Left cardiac atrium (tissue), 4 donors: ENCODE measurements at regions of chr10 and their contacts with region 1.

Region 1: DNA sequence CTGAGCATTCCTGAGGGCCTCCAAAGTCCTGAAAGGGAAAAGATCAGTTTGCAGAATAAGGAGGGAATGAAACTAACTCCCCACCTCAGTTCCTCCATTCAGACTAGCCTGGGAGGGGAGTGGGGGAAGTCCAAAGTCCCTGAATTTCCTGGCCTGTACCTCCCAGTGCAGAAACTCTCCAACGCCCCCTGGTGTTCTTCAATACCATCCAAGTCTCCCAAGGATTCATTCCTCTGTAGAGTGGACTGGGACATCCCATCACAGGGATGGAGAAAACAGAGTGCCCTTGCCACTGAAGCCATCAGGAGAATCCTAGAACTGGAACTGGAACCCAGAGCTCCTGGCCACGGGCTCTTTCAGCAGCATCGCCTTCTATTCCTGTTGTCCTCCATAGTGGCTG is 1.6 kb upstream of the COL13A1 start:
- DNase-seq: no peak
- ATAC-seq: peak in 1 of 2 donors; percentile 50

Region 2: GRCh38 chr10:69639291-69640195 is 160.6 kb before region 1 on chr10:
- intact Hi-C with region 1: loop called in 1 of 2 experiments (anchors 10 kb)
- DNase-seq: peak; percentile 54
- ATAC-seq: peak in 1 of 2 donors; percentile 61

Region 3: DNA sequence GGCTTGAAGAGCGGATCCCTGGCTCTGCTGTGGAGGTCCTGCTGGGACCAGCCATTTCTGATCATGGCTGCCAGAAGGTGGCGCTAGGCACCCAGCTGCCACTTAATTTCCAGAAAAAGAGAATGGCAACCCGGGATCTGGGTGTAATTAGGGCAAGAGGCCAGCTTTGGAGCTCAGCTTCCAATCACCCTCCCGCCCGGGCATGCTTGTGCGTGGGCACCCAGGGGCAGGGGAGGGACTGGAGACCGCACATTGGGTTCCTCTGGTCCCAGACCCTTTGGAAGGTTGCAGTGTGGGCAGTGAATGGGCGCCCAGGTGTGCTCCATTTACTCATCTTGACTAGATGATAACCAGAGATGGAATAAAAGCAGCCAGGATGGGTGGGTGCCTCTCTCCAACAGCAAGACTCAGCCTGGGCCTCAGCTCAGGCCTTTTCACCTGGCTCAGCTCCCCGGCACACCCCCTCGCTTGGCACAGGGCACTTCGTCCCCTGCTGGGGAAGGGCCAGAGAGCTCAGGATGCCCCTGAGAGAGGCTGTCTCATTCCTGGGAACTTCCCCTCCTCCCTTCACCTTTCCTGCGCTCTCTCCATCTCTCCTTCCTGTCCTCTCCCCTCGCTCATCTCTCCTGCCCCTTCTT is 155.3 kb before region 1 on chr10:
- intact Hi-C with region 1: loop called (anchors 5 to 10 kb)
- DNase-seq: peak; percentile 59
- ATAC-seq: peak; percentile 57 to 69

Region 4: GRCh38 chr10:69696073-69696731 is 103.9 kb before region 1 on chr10:
- intact Hi-C with region 1: loop called in 1 of 2 experiments (anchors 5 kb)
- DNase-seq: peak; percentile 44
- ATAC-seq: peak; percentile 74 to 79

Region 5: DNA sequence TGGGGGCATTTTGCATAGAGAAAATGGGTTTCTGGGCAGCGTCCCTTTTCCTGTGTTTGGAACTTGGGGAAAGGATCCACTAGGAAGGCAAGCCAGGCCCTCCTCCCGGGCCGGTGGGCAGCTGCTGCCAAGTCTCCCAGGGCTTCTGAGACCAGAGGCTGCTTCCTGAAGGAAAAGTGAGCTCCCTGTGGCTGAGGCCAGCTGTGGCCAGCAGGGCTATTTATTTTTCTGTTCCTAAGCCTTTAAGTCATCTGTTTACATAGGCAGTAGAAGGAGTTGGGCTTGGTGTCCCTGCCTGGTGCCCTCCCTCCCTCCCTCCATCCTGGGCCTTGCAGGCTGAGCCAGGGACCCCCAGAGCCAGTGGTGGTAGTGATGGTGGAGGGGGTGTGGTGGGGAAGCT is 68.9 kb before region 1 on chr10:
- intact Hi-C with region 1: loop called in 1 of 2 experiments (anchors 5 kb)
- DNase-seq: no peak
- ATAC-seq: peak in 1 of 2 donors; percentile 32

Region 6: DNA sequence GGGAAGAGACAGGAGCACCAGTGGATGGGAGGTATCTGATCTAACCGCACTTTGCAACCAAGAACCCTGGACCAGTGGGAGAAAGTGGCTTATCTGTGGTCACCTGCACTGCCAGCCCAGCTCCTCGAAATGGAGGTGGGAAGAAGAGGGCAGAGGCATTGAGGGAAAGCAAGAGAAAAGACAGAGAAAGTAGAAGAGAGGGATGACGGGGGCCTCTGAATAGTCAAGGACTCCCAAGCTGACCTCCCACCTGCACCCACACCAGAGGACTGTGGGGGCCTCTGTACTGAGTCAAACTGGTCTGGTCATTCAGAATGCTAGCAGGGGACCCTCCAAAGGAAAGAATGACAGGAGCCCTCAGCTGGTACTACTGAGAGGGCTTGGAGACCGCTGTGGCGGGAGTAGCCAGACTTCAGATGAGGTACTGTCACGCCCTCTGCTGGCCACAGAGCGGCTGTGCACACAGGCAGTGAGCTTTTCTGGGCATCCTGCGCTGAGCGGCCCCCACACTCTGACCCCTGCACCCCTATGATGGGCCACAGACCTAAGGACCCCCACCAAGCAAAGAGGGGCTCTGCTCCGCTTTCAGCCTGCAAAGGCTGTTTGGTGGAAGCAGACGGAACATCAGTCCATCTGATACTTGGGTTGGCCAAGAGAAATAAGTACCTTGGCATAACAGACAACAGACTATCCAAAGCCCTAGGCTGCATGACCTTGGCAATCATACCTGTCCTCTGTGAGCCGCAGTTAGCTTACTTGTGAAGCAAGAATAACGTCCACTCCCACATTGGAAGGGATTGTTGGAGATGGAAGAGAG is 114.5 kb after region 1 on chr10:
- intact Hi-C with region 1: loop called in 1 of 2 experiments (anchors 5 kb)
- DNase-seq: peak; percentile 80
- ATAC-seq: peak; percentile 70 to 79